Activated T-helper 1 cell treated with anti-CD3 and anti-CD28 coated beads, Interleukin-12 subunit alpha, Interleukin-12 subunit beta, Interleukin-2, Interleukin-4 antibody, amounts not matched to agents 30 ng/mL and 10 ng/mL and 1 ng/mL, durations not matched to agents 14 hours and 24 hours and 36 hours (primary cell): ENCODE measurements at regions of chr5 and their contacts with region 1.

Region 1: DNA sequence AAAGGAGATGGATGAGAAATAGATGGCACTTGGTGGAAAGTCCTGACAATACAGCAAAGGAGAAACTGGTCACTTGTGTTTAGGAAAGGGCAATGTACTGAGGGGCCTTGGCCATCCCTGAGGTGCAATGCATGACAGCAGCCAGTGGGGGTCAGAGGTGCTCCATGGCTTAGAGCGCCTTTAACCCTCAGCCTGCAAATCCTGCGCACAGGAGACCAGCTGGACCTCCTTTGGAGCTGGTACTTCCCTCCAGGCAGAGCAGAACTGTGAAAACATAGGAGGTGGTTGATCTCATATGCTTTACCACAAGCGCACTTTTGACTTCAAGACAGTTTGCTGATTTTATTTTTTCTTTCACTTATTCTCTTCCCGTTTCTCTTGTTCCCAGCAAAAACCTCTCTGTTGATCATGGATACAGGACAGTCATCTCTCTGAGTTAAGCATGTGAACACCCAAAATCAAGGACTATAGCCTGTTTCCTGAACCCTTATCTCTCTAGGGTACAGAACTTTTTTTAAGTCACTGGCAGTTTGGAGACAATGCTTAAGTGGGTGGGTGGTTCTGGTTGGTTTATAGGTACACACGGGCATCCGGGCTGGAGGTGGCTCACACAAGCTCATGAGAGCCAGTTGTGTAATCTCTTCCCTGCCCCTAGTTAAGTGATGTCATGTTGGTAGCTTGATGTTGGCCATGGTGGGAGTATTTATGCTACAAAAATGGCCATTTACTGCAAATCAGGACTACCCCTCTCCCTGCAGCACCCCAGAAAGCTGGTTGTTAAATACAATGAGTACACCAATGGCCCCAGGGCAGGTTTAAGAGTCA is 37.6 kb upstream of the ANKRD55 start:
- DNase-seq: peak; percentile 65
- H3K4me3 Mint-ChIP-seq: peak overlapping the region; percentile 48
- H3K27ac Mint-ChIP-seq: peak overlapping the region; percentile 46
- H3K4me1 Mint-ChIP-seq: peaks cover 21% of the 10 kb centered on the region
- H3K27me3 Mint-ChIP-seq: no peaks in the 10 kb centered on the region

Region 2: GRCh38 chr5:55936100-55936693 is 334.6 kb before region 1 on chr5:
- intact Hi-C with region 1: loop called (anchors 1 kb)
- DNase-seq: peak; percentile 59
- H3K4me3 Mint-ChIP-seq: no peak overlapping the region
- H3K27ac Mint-ChIP-seq: no peak overlapping the region
- H3K4me1 Mint-ChIP-seq: peaks cover 6% of the 10 kb centered on the region
- H3K27me3 Mint-ChIP-seq: no peaks in the 10 kb centered on the region

Region 3: DNA sequence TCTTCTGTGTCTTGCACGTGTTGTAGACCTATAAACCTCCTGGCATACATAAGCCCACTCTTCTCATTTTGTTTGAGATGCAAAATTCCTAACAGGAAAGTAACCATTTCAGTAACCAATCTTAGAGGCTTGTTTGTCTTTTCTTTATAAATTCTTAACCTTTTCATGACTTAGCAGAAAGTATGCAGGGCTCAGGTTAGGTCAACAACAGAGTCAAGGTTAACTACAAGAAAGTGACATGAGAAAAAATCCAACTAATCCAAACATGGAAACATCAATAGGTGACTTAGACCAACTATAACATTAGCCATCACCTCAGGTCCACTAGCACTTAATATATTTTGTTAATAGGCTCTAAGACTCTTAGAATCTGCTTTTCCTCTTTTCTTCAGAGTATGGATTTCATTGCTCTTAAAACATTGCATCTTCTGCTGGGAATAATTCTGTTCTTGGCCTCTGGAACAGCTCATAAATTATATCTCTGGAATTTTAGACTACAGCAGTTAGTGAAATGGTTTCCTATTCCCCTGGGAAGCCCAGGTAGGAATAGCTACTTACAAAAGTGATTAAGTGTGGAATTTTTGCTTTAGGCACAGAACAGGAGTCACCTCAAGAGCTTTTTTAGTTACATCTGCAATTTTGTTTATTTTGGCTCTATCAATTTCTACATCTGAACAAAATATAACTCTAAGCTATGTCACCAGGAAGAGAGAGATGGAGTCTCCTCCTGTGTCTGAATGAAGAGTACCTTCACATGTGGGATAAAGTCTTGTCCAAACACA is 117.6 kb after region 1 on chr5:
- intact Hi-C with region 1: loop called (anchors 2 kb)
- DNase-seq: no peak
- H3K4me3 Mint-ChIP-seq: no peak overlapping the region
- H3K27ac Mint-ChIP-seq: no peak overlapping the region
- H3K4me1 Mint-ChIP-seq: no peaks in the 10 kb centered on the region
- H3K27me3 Mint-ChIP-seq: no peaks in the 10 kb centered on the region

Region 4: GRCh38 chr5:56610093-56610698 is 339.4 kb after region 1 on chr5:
- intact Hi-C with region 1: loop called (anchors 2 kb)
- DNase-seq: peak; percentile 49
- H3K4me3 Mint-ChIP-seq: peak overlapping the region; percentile 48
- H3K27ac Mint-ChIP-seq: peak overlapping the region; percentile 81
- H3K4me1 Mint-ChIP-seq: peaks cover 89% of the 10 kb centered on the region
- H3K27me3 Mint-ChIP-seq: peaks cover 3% of the 10 kb centered on the region

Region 5: GRCh38 chr5:56900858-56901578 is 630.2 kb after region 1 on chr5:
- intact Hi-C with region 1: loop called (anchors 2 kb)
- DNase-seq: no peak
- H3K4me3 Mint-ChIP-seq: no peak overlapping the region
- H3K27ac Mint-ChIP-seq: no peak overlapping the region
- H3K4me1 Mint-ChIP-seq: no peaks in the 10 kb centered on the region
- H3K27me3 Mint-ChIP-seq: peaks cover 10% of the 10 kb centered on the region

Region 6: GRCh38 chr5:57277085-57277484 is 1006.3 kb after region 1 on chr5:
- intact Hi-C with region 1: loop called (anchors 5 kb)
- DNase-seq: no peak
- H3K4me3 Mint-ChIP-seq: no peak overlapping the region
- H3K27ac Mint-ChIP-seq: no peak overlapping the region
- H3K4me1 Mint-ChIP-seq: no peaks in the 10 kb centered on the region
- H3K27me3 Mint-ChIP-seq: peaks cover 9% of the 10 kb centered on the region